ENCODE measurements at regions of chr12 and their contacts with region 1.

Region 1: GRCh38 chr12:62603061-62603810 is 136.6 kb downstream of the MON2 start:
- DNase-seq: peak; percentile 90
- H3K4me3 ChIP-seq: peak overlapping the region; percentile 92 to 99 (median 99)
- H3K27ac ChIP-seq: peak overlapping the region; percentile 97
- H3K4me1 ChIP-seq: peaks cover 22% of the 10 kb centered on the region
- H3K27me3 ChIP-seq: no peaks in the 10 kb centered on the region
- CTCF ChIP-seq: peak; percentile 29 to 75
- POLR2A ChIP-seq: peak; percentile 55

Region 2: DNA sequence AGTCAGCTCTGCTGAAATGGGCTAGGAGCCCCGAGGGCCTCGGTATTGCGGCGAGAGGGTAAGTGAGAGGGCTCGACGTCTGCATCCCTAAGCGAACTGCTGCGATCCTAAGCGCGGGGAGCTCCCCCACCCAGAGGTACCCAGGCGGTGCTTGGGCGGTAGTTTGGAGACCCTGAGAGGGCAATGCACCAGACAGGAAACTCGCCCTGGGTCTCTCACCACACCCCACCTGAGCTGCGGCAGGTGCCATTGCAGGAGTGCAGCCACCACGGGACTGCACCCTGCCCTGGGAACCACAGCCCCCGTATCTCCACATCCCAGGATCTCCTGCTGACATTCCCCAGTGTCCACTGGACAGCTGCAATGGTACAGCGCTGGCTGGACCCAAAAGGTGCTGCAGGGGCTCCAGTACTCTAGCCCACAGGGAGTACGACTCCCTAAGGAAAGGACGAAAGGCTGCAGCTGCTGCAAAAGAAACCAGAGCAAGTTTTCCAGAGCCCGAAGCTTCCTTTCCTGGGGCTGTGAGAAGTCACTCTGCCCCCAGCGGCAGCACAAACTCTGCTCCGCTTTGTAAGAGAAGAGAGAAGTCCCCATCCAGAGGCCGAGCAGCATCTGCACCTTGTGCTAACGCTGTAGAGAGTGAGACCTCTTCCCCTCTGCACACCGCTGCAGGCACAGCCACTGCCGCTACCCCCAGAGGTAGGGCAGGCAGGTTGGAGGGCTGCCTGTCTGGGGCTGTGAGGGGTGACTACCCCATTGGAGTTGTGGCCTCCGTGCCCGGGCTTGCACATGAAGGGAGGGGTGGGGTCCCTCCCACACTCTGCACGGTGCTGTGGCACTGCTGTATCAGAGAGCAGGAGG is 167.7 kb before region 1 on chr12:
- CTCF ChIA-PET with region 1: interaction called, 4 read pairs
- POLR2A ChIA-PET with region 1: no interaction called
- dilution Hi-C with region 1: no loop called
- intact Hi-C with region 1: loop called (anchors 5 kb)
- DNase-seq: peak; percentile 52
- H3K4me3 ChIP-seq: peak overlapping the region; percentile 4 to 51 (median 23)
- H3K27ac ChIP-seq: no peak overlapping the region
- H3K4me1 ChIP-seq: peaks cover 9% of the 10 kb centered on the region
- H3K27me3 ChIP-seq: peaks cover 12 to 30% of the 10 kb centered on the region in 2 experiments
- CTCF ChIP-seq: peak; percentile 37 to 78
- POLR2A ChIP-seq: no peak

Region 3: GRCh38 chr12:62581288-62582064 is 21.8 kb before region 1 on chr12:
- CTCF ChIA-PET with region 1: interaction called, 44 read pairs
- POLR2A ChIA-PET with region 1: no interaction called
- dilution Hi-C with region 1: no loop called
- intact Hi-C with region 1: no loop called
- DNase-seq: peak; percentile 58
- H3K4me3 ChIP-seq: no peak overlapping the region
- H3K27ac ChIP-seq: no peak overlapping the region
- H3K4me1 ChIP-seq: no peaks in the 10 kb centered on the region
- H3K27me3 ChIP-seq: no peaks in the 10 kb centered on the region
- CTCF ChIP-seq: peak; percentile 43 to 58
- POLR2A ChIP-seq: no peak

Region 4: DNA sequence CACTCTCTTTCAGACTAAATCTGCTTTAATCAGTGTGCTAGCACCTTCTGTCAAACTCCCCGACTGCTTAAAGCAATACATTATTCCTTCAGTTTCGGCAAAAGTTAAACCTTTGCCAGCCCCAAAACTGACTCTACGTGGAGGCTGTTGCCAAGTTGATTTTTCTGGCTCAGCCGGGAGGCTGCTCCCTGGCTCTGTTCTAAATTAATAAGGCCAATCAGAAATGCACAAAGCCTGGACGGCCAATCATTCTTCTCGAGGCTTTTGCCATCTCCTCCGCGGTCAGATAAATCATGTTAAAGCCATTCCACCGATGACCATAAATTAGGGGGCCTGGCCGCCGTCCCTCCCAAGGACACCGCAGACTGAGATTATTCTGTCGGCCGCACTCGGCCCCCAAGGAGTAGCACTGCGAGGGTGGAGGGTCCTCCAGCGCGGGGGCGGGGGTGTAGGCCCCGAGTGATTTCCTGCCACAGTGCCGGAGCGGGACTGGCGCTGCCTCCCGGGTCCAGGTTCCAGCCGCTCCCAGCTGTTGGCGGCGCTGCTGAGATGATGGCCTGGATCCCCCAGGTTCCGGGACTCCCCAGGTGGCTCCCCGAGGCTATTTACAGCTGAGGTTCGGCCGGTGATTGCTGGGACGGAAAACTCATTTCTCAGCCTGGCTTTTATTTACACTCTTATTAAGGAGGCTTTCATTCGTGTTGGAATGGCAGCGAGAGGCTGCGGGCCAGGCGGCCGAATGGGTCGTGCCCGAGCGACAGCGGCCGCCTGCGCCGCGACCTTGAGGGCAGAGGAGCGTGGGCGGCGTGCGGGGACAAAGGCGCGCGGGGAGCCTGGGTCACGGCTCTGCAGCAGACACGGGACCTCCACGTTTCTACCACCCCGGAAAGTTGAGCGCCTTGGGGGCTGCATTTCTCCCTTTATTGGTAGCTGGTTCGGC is 28.5 kb after region 1 on chr12:
- CTCF ChIA-PET with region 1: interaction called, 5 read pairs
- POLR2A ChIA-PET with region 1: no interaction called
- dilution Hi-C with region 1: no loop called
- intact Hi-C with region 1: loop called (anchors 1 kb)
- DNase-seq: peak; percentile 68
- H3K4me3 ChIP-seq: peak overlapping the region; percentile 47 to 79 (median 63)
- H3K27ac ChIP-seq: peak overlapping the region; percentile 1
- H3K4me1 ChIP-seq: peaks cover 17% of the 10 kb centered on the region
- H3K27me3 ChIP-seq: no peaks in the 10 kb centered on the region
- CTCF ChIP-seq: peak; percentile 29 to 52
- POLR2A ChIP-seq: no peak

Region 5: DNA sequence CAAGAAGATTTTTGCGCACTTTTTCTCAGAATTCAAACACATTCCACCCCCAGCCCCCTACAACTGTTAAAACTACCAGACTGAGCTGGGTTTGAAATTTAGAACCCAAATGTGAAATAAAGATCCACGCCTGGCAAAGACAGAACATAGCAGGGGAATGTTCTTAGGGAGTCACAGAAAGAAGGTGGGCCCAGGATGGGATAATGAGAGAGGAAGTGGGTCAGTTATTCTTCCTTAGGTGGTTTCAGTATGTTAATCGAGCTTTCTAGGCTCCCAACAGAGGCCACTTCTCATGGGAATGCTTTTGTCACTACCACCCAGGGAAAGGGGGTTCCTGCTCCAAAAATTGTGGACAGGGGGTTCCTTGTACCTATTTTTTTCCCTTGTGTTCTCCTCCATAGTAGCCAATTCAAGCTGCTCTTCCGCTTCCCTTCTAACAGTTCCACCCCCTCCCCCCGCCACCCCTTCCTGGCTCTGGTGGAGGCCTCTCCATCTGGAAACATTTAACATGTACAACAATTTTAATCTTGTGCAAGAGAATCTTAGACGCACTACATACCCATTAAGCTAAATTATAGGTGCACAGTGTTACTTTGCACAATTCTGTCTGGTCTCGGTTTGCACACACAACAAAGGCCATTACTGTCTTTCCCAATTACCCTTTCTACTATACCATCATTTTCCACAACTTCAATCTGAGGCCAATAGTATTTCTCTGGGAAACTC is 81.5 kb after region 1 on chr12:
- CTCF ChIA-PET with region 1: no interaction called
- POLR2A ChIA-PET with region 1: no interaction called
- dilution Hi-C with region 1: no loop called
- intact Hi-C with region 1: no loop called
- DNase-seq: no peak
- H3K4me3 ChIP-seq: no peak overlapping the region
- H3K27ac ChIP-seq: no peak overlapping the region
- H3K4me1 ChIP-seq: peaks cover 2% of the 10 kb centered on the region
- H3K27me3 ChIP-seq: no peaks in the 10 kb centered on the region
- CTCF ChIP-seq: no peak
- POLR2A ChIP-seq: no peak

Region 6: GRCh38 chr12:62724947-62725447 is 121.8 kb after region 1 on chr12:
- CTCF ChIA-PET with region 1: no interaction called
- POLR2A ChIA-PET with region 1: no interaction called
- dilution Hi-C with region 1: no loop called
- intact Hi-C with region 1: loop called (anchors 1 kb)
- DNase-seq: peak; percentile 92
- H3K4me3 ChIP-seq: no peak overlapping the region
- H3K27ac ChIP-seq: peak overlapping the region; percentile 93
- H3K4me1 ChIP-seq: peaks cover 23% of the 10 kb centered on the region
- H3K27me3 ChIP-seq: no peaks in the 10 kb centered on the region
- CTCF ChIP-seq: no peak
- POLR2A ChIP-seq: no peak

Region 7: GRCh38 chr12:62793256-62794217 is 190.3 kb after region 1 on chr12:
- CTCF ChIA-PET with region 1: interaction called, 79 read pairs
- POLR2A ChIA-PET with region 1: interaction called, 7 read pairs
- dilution Hi-C with region 1: loop called (anchors 25 kb)
- intact Hi-C with region 1: loop called (anchors 1 kb)
- DNase-seq: peak; percentile 91
- H3K4me3 ChIP-seq: no peak overlapping the region
- H3K27ac ChIP-seq: no peak overlapping the region
- H3K4me1 ChIP-seq: peaks cover 16% of the 10 kb centered on the region
- H3K27me3 ChIP-seq: no peaks in the 10 kb centered on the region
- CTCF ChIP-seq: peak; percentile 87 to 92
- POLR2A ChIP-seq: no peak

Region 8: DNA sequence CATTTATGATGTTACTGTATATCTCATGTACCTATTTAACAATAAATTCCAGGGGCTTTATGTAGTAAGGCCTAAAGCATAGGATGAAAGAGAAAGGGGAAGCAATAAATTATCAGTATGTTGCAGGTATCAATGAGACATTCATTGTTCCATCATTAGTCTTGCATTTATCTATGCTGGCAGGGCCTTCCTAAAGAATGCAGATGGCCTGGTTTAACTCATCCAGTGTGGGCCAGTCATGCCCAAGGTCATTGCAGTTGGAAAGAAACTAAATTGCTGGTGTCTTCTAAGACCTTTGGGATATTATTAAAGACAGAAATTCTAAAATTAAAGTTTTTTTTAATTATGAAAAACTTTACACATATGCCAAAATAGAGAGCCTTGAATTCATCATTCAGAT is 449.5 kb after region 1 on chr12:
- CTCF ChIA-PET with region 1: no interaction called
- POLR2A ChIA-PET with region 1: no interaction called
- dilution Hi-C with region 1: no loop called
- intact Hi-C with region 1: no loop called
- DNase-seq: no peak
- H3K4me3 ChIP-seq: no peak overlapping the region
- H3K27ac ChIP-seq: no peak overlapping the region
- H3K4me1 ChIP-seq: no peaks in the 10 kb centered on the region
- H3K27me3 ChIP-seq: no peaks in the 10 kb centered on the region
- CTCF ChIP-seq: no peak
- POLR2A ChIP-seq: no peak

Region 9: GRCh38 chr12:63068857-63069442 is 465.7 kb after region 1 on chr12:
- CTCF ChIA-PET with region 1: no interaction called
- POLR2A ChIA-PET with region 1: no interaction called
- dilution Hi-C with region 1: no loop called
- intact Hi-C with region 1: loop called (anchors 10 kb)
- DNase-seq: peak; percentile 80
- H3K4me3 ChIP-seq: no peak overlapping the region
- H3K27ac ChIP-seq: no peak overlapping the region
- H3K4me1 ChIP-seq: no peaks in the 10 kb centered on the region
- H3K27me3 ChIP-seq: peaks cover 2% of the 10 kb centered on the region in 2 experiments
- CTCF ChIP-seq: peak; percentile 29 to 35
- POLR2A ChIP-seq: no peak

Measured in endothelial cell of umbilical vein (primary cell).